Activated naive CD4-positive, alpha-beta T cell treated with anti-CD3 and anti-CD28 coated beads for 36 hours (primary cell): ENCODE measurements at regions of chr6 and their contacts with region 1.

Region 1: GRCh38 chr6:150079604-150080003 is 10.7 kb upstream of the ULBP3 start:
- DNase-seq: peak; percentile 35
- H3K4me3 Mint-ChIP-seq: no peak overlapping the region
- H3K27ac Mint-ChIP-seq: no peak overlapping the region
- H3K4me1 Mint-ChIP-seq: peaks cover 10% of the 10 kb centered on the region
- H3K27me3 Mint-ChIP-seq: peaks cover 2% of the 10 kb centered on the region

Region 2: DNA sequence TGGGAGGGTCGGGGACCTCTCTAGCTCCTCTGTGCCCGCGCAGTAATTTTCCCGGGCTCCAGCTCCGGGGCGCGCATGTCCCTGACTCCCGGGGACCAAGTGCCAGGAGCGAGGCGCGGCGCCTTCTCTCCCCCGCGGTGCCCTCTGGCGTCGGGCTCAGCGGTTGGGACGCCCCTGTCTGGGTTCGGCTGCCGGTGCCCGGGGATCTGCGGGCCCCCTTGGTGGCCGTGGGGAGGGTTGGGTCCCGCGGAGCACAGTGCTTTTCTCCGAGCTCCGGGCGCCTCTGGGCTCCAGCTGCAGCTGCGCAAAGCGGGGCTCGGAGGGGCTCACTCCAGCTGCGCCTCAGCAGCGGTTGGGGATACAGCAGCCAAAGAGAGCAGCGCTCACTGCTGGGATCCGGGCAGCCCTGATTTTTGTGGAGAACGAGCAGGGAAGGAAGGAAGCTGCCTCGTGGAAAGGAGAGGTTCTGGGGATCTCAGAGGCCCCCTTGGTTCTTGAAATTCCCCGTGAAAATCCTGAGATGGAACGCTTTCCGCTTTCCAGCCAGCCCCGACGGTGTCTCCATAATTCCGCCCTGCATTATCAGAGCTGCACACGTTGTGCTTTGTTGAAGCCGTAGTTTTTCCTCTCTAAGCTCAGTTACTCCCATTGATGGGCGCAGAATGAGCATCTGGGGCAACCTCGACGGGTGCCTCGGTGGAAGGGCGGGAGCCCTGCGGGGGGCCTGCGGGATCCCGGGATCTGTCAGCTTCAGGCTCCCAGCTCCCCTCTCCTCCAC is 64.1 kb after region 1 on chr6:
- CTCF ChIA-PET with region 1: interaction called, 10 read pairs
- intact Hi-C with region 1: no loop called
- DNase-seq: no peak
- H3K4me3 Mint-ChIP-seq: peak overlapping the region; percentile 32
- H3K27ac Mint-ChIP-seq: no peak overlapping the region
- H3K4me1 Mint-ChIP-seq: peaks cover 17% of the 10 kb centered on the region
- H3K27me3 Mint-ChIP-seq: peaks cover 73% of the 10 kb centered on the region

Region 3: DNA sequence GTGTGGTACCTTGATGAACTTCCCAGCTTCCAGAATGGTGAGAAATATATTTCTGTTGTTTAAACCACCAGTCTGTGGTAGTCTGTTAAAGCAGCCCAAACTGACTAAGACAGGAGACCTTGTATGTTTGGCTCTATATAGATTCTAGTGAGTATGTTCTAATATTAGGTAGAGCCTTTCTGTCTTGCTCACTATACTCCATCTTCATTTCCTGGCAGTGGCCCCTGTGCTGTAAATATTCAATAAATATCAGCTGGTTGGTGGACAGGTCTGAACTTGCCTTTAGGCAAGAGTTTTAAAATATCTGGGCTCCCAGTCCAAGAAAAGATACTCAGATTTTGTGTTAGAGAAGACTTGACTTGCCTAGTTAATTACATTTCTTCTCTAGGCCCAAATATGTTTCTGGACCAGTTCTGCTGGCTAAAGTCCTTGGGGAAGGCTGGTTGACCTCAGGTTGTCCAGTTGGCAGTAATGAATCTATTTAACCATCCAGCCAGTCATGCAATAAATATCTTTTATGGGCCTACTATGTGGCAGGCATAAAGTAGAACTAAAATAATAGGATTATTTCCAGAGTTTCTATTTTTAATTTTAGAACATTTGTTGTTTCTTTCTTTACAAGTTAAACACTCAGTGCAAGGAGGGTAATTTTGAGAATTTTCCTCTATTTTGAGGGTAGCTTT is 85.6 kb after region 1 on chr6:
- CTCF ChIA-PET with region 1: no interaction called
- intact Hi-C with region 1: no loop called
- DNase-seq: no peak
- H3K4me3 Mint-ChIP-seq: no peak overlapping the region
- H3K27ac Mint-ChIP-seq: no peak overlapping the region
- H3K4me1 Mint-ChIP-seq: peaks cover 11% of the 10 kb centered on the region
- H3K27me3 Mint-ChIP-seq: peaks cover 29% of the 10 kb centered on the region

Region 4: GRCh38 chr6:150184850-150185731 is 105.5 kb after region 1 on chr6:
- CTCF ChIA-PET with region 1: interaction called, 7 read pairs
- intact Hi-C with region 1: loop called (anchors 5 kb)
- DNase-seq: no peak
- H3K4me3 Mint-ChIP-seq: no peak overlapping the region
- H3K27ac Mint-ChIP-seq: no peak overlapping the region
- H3K4me1 Mint-ChIP-seq: no peaks in the 10 kb centered on the region
- H3K27me3 Mint-ChIP-seq: peaks cover 11% of the 10 kb centered on the region

Region 5: GRCh38 chr6:150334790-150335783 is 255.5 kb after region 1 on chr6:
- CTCF ChIA-PET with region 1: interaction called, 9 read pairs
- intact Hi-C with region 1: loop called (anchors 1 kb)
- DNase-seq: peak; percentile 64
- H3K4me3 Mint-ChIP-seq: no peak overlapping the region
- H3K27ac Mint-ChIP-seq: no peak overlapping the region
- H3K4me1 Mint-ChIP-seq: no peaks in the 10 kb centered on the region
- H3K27me3 Mint-ChIP-seq: peaks cover 2% of the 10 kb centered on the region

Region 6: DNA sequence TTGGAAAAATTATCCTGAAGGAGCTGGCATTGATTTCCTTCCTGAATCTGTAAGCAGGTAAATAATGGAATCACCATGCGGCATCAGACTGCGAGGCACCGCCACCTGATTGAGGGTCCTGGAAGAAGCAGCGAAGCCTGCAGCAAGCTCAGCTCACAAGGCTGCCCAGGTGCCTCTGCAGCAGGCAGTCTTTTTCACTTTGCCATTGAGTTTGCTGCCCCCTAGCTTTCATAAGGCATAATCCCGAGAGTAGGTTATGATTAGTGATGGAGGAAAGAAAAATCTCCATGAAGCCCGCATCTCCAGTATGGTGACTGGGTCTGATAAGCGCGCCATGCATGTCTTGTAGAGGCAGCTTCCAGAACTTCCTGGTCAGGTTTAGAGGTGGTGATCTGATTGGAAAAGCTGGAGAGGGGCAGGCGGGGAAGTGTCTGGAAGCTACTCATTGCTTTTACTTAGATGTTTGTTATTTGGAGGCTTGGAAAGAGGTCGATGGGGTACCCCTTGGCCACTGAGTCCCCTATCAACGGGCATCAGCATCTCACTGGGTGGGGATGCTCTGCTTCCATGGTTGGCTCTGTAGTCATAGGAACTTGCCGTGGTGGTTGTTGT is 315.9 kb after region 1 on chr6:
- CTCF ChIA-PET with region 1: interaction called, 43 read pairs
- intact Hi-C with region 1: loop called (anchors 1 kb)
- DNase-seq: peak; percentile 59
- H3K4me3 Mint-ChIP-seq: no peak overlapping the region
- H3K27ac Mint-ChIP-seq: no peak overlapping the region
- H3K4me1 Mint-ChIP-seq: no peaks in the 10 kb centered on the region
- H3K27me3 Mint-ChIP-seq: peaks cover 8% of the 10 kb centered on the region